IMR-90 (cell line): ENCODE measurements at regions of chr1 and their contacts with region 1.

Region 1: DNA sequence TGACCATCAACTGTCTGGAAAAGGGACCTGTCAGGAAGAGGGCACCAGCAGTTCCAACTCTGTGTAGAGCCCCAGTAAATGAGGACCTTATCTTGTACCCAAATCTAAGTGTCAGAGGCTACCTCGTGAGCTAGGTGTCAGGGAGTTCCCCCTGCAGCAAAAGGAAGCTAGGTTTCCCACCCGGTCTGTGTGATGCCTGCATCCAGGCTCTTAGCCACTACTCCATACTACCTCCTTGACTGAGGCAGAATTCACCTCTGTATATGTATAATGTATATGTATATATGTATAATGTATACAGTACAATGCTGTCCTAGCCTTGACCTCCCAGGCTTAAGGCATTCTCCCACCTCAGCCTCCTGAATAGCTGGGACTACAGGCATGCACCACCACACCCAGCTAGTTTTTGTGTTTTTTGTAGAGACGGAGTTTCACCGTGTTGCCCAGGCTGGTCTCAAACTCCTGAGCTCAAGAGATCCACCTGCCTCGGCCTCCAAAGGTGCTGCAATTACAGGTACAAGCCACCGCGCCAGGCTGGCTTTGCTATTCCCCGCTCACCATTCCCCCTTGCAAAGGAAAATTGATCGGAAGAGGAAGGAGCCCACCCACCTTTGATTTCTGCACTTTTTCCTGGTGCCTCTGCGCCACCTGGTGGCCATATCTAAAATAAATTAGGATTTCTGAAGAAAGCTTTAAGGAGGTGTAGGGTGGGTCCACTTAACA is 15.7 kb upstream of the LUZP1 start:
- DNase-seq: peak; percentile 41
- ATAC-seq: peak; percentile 51; the same call in 1 of the 2 replicates
- H3K4me3 ChIP-seq: no peak overlapping the region
- H3K27ac ChIP-seq: no peak overlapping the region
- H3K4me1 ChIP-seq: 0 out of 2 replicates have a peak, but pooled peaks cover 4% of the 10 kb centered on the region
- H3K27me3 ChIP-seq: no peaks in the 10 kb centered on the region
- CTCF ChIP-seq: peak; percentile 72
- POLR2A ChIP-seq: no peak
- RAD21 ChIP-seq: peak; percentile 83

Region 2: DNA sequence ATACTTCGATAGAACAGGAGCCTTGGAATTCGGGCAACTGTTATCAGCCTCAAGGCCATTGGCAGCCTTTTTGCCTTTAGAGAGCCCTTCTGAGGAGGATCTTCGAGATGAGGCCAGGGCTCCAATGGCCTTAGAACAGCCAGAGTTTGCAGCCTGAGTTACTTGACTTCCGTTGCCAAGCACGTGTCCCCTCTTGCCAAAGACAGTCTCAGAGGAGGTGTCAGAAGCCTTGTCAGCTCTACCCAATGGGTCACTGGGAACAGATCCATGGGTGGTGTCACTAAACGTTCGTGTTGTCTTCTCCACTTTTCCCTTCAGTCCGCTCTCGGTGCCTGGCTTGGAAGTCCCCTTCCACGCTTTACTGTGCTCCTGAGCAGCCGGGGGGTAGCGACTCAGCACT is 91.9 kb before region 1 on chr1:
- CTCF ChIA-PET with region 1: interaction called, 11 read pairs
- POLR2A ChIA-PET with region 1: no interaction called
- dilution Hi-C with region 1: no loop called
- in situ Hi-C with region 1: loop called (anchors 5 kb)
- intact Hi-C with region 1: no loop called
- DNase-seq: no peak
- ATAC-seq: no peak
- H3K4me3 ChIP-seq: no peak overlapping the region
- H3K27ac ChIP-seq: no peak overlapping the region
- H3K4me1 ChIP-seq: peaks cover 2% of the 10 kb centered on the region; the same call in 1 of the 2 replicates
- H3K27me3 ChIP-seq: no peaks in the 10 kb centered on the region
- CTCF ChIP-seq: no peak
- POLR2A ChIP-seq: no peak
- RAD21 ChIP-seq: no peak

Region 3: DNA sequence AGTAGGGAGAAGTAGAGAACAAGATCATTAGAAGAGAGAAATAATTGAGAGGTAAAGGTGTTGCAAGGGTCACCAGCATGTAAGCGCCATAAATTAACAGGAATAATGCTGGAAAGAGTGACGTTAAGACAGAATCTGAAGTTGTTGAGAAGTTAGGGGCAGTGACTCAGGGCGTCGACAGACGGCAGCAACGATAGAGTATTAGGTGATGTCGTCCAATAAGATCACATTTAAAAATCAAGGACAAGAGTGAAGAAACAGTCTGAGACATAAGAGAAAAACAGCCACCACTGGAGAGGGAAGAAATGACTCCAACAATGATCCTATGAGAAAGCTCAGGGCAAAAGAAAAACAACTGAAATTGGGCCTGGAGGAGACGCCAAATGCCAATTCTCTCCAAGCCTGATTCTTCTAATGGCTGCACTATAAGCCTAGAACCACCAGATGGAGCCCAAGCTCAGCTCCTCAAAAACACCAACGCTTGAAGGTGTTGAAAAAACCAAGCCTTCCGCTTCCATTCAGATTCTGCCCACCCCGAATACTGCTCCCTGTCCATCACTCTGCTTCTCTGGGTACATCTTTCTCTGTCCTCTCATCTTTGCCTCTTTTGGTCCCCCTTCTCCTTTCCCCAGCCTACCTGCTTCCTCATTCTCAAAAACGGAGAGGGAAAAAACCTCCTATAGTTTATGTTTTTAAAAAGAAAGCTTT is 85.8 kb before region 1 on chr1:
- CTCF ChIA-PET with region 1: interaction called, 32 read pairs
- POLR2A ChIA-PET with region 1: no interaction called
- dilution Hi-C with region 1: no loop called
- in situ Hi-C with region 1: loop called (anchors 5 kb)
- intact Hi-C with region 1: loop called (anchors 1 kb)
- DNase-seq: peak; percentile 77
- ATAC-seq: peak; percentile 59
- H3K4me3 ChIP-seq: no peak overlapping the region
- H3K27ac ChIP-seq: no peak overlapping the region
- H3K4me1 ChIP-seq: peaks cover 18% of the 10 kb centered on the region
- H3K27me3 ChIP-seq: no peaks in the 10 kb centered on the region
- CTCF ChIP-seq: peak; percentile 98
- POLR2A ChIP-seq: peak; percentile 54
- RAD21 ChIP-seq: peak; percentile 98

Region 4: DNA sequence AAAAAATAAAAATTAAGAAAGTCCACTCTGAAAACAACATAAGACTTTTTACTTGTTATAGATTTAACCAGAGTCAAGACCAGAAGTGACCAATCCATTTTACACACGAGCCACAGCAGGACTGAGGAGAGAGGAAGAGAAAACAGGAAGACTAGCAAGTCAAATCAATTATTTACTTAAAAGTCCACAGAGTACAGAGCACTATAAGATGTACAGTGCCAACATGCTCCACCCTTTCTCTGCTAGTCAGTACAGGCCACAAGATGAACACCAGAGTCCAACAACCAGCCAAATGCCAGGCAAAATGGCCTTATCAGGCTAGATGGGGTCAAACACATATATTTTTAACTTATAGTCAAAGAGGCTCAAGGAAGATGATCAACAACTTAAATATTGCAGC is 35.3 kb before region 1 on chr1:
- CTCF ChIA-PET with region 1: no interaction called
- POLR2A ChIA-PET with region 1: no interaction called
- dilution Hi-C with region 1: no loop called
- in situ Hi-C with region 1: no loop called
- intact Hi-C with region 1: no loop called
- DNase-seq: no peak
- ATAC-seq: no peak
- H3K4me3 ChIP-seq: no peak overlapping the region
- H3K27ac ChIP-seq: no peak overlapping the region
- H3K4me1 ChIP-seq: peaks cover 5% of the 10 kb centered on the region
- H3K27me3 ChIP-seq: no peaks in the 10 kb centered on the region
- CTCF ChIP-seq: no peak
- POLR2A ChIP-seq: no peak
- RAD21 ChIP-seq: no peak

Region 5: DNA sequence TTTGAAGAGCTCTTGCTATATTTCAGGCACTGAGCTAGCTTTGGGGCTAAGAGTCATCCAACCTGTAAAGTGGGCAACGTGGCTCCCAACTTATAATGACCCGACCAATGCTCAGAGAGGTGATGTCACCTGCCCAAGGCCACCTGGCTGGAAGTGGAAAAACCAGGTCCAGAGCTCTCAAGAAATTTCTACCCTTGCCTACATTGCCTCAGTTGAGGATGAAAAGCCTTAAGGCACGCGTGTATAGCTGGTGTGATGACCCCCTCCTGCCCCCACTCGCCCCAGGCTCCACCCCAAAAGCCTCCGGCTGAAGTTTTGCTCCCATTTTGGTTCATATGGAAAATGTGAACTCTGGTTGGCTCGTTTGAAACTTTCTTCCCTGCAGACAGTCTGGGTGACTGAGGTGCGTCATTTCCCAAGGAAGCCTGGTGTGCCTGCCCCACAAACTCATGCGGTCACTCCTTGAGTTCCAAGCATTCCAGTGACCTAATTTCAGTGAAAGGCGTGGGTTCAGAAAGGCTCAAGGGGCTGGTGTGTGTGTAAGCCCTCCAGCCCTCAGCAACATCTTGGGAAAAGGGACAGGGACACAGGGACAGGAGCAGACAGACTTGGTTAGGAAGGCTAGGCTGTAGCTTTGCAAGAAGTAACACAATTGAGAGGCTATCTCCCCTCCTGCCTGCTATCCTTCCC is 12.4 kb after region 1 on chr1:
- CTCF ChIA-PET with region 1: interaction called, 24 read pairs
- POLR2A ChIA-PET with region 1: no interaction called
- dilution Hi-C with region 1: no loop called
- in situ Hi-C with region 1: no loop called
- intact Hi-C with region 1: no loop called
- DNase-seq: peak; percentile 98
- ATAC-seq: peak; percentile 71
- H3K4me3 ChIP-seq: no peak overlapping the region
- H3K27ac ChIP-seq: peak overlapping the region; percentile 92
- H3K4me1 ChIP-seq: peaks cover 18% of the 10 kb centered on the region
- H3K27me3 ChIP-seq: no peaks in the 10 kb centered on the region
- CTCF ChIP-seq: no peak
- POLR2A ChIP-seq: peak; percentile 72
- RAD21 ChIP-seq: no peak

Region 6: GRCh38 chr1:23282957-23283356 is 98.6 kb after region 1 on chr1:
- CTCF ChIA-PET with region 1: interaction called, 4 read pairs
- POLR2A ChIA-PET with region 1: no interaction called
- dilution Hi-C with region 1: no loop called
- in situ Hi-C with region 1: loop called (anchors 5 kb)
- intact Hi-C with region 1: no loop called
- DNase-seq: peak; percentile 79
- ATAC-seq: peak; percentile 72
- H3K4me3 ChIP-seq: no peak overlapping the region
- H3K27ac ChIP-seq: peak overlapping the region; percentile 2; the same call in 1 of the 2 replicates
- H3K4me1 ChIP-seq: peaks cover 8% of the 10 kb centered on the region; the same call in 1 of the 2 replicates
- H3K27me3 ChIP-seq: no peaks in the 10 kb centered on the region
- CTCF ChIP-seq: no peak
- POLR2A ChIP-seq: no peak
- RAD21 ChIP-seq: no peak

Region 7: DNA sequence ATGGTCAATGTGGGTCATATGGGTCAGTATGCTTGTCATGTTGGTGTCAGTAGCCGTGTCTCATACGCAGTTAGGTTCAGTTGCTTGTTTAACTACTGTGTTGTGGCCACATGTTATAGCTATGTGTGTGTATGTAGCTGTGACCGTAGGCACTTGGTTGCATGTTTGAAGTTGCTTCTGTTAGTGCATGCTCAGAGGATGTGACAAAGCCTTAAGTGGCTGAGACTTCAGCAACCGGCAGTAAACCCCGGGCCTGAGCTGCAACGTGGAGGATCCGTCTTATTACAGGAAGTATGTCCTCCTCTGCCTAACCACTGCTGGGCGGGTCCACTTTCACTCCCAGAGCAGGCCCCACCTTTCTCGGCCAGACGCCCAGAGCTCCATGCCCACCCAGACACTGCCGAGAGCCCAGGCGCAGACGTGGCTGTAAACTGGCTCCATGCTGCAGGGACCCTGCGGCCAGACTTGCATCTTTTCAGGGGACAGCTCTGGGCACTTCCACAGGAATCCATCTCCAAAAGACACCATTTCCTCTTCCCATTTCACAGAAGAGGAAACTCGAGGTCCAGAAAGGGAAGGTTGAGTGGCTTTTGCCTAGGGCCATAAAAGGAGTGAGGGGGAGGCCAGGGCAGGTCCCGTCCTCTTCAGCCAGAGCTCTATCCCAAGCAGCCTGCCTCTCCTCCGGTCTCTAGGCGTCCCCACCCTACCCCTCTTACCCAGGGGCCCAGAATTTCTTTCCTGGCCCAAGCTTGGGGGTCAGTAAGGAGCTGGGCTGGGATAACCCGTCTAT is 238.1 kb after region 1 on chr1:
- CTCF ChIA-PET with region 1: no interaction called
- POLR2A ChIA-PET with region 1: no interaction called
- dilution Hi-C with region 1: no loop called
- in situ Hi-C with region 1: no loop called
- intact Hi-C with region 1: no loop called
- DNase-seq: peak; percentile 82
- ATAC-seq: peak; percentile 86
- H3K4me3 ChIP-seq: no peak overlapping the region
- H3K27ac ChIP-seq: peak overlapping the region; percentile 76
- H3K4me1 ChIP-seq: peaks cover 16% of the 10 kb centered on the region
- H3K27me3 ChIP-seq: no peaks in the 10 kb centered on the region
- CTCF ChIP-seq: no peak
- POLR2A ChIP-seq: no peak
- RAD21 ChIP-seq: no peak

Region 8: GRCh38 chr1:23601968-23602876 is 417.8 kb after region 1 on chr1:
- CTCF ChIA-PET with region 1: no interaction called
- POLR2A ChIA-PET with region 1: no interaction called
- dilution Hi-C with region 1: no loop called
- in situ Hi-C with region 1: no loop called
- intact Hi-C with region 1: no loop called
- DNase-seq: no peak
- ATAC-seq: no peak
- H3K4me3 ChIP-seq: no peak overlapping the region
- H3K27ac ChIP-seq: no peak overlapping the region
- H3K4me1 ChIP-seq: no peaks in the 10 kb centered on the region
- H3K27me3 ChIP-seq: no peaks in the 10 kb centered on the region
- CTCF ChIP-seq: no peak
- POLR2A ChIP-seq: no peak
- RAD21 ChIP-seq: no peak